ENCODE measurements at regions of chr4 and their contacts with region 1.

Region 1: DNA sequence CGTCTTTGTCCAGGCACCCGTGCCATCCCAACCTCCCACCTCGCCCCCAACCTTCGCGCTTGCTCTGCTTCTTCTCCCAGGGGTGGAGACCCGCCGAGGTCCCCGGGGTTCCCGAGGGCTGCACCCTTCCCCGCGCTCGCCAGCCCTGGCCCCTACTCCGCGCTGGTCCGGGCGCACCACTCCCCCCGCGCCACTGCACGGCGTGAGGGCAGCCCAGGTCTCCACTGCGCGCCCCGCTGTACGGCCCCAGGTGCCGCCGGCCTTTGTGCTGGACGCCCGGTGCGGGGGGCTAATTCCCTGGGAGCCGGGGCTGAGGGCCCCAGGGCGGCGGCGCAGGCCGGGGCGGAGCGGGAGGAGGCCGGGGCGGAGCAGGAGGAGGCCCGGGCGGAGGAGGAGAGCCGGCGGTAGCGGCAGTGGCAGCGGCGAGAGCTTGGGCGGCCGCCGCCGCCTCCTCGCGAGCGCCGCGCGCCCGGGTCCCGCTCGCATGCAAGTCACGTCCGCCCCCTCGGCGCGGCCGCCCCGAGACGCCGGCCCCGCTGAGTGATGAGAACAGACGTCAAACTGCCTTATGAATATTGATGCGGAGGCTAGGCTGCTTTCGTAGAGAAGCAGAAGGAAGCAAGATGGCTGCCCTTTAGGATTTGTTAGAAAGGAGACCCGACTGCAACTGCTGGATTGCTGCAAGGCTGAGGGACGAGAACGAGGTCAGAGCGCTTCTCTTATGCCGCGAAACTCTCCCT is at the start of gene TET2:
- DNase-seq: peak; percentile 94
- H3K4me3 ChIP-seq: peak within 1 kb of the TSS; percentile 79 to 91 (median 84)
- H3K27ac ChIP-seq: peak within 1 kb of the TSS; percentile 85 to 88 (median 88)
- H3K4me1 ChIP-seq: peaks cover 11 to 34% (median 31%) of the 10 kb centered on the region in 4 donors
- H3K27me3 ChIP-seq: no peaks in the 10 kb centered on the region
- CTCF ChIP-seq: peak in 1 of 3 experiments; percentile 18
- EP300 ChIP-seq: no peak
- POLR2A ChIP-seq: no peak
- total RNA-seq, gene TET2: 22.0 to 31.5 (median 28.0) TPM

Region 2: GRCh38 chr4:105191621-105192210 is 45.3 kb after region 1 on chr4:
- intact Hi-C with region 1: no loop called
- DNase-seq: no peak
- H3K4me3 ChIP-seq: peak overlapping the region in 1 of 4 donors; percentile 10
- H3K27ac ChIP-seq: peak overlapping the region; percentile 45 to 52 (median 48)
- H3K4me1 ChIP-seq: peaks cover 36 to 49% (median 43%) of the 10 kb centered on the region in 4 donors
- H3K27me3 ChIP-seq: no peaks in the 10 kb centered on the region
- CTCF ChIP-seq: no peak
- EP300 ChIP-seq: no peak
- POLR2A ChIP-seq: no peak

Region 3: DNA sequence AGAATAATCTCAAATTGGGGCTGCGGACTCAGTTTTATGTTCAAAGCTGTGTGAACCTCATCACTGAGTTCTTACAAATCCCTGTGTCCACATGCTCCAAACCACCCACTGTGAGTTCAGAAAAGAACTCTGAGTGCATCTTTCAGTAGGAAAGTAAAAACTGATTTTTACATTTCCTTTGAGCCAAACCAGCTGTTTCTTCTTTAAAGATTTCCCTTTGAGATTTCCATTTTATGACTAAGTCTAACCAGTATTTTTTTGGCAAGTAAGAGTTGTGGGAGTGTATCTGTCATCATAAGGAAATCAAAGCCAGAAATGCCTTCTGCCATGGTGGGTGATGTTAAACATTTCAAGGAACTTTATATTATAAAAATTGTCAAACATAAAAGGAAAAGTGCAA is 100.3 kb after region 1 on chr4:
- intact Hi-C with region 1: loop called (anchors 10 kb)
- DNase-seq: no peak
- H3K4me3 ChIP-seq: no peak overlapping the region
- H3K27ac ChIP-seq: no peak overlapping the region
- H3K4me1 ChIP-seq: peaks cover 4 to 11% (median 4%) of the 10 kb centered on the region in 4 donors
- H3K27me3 ChIP-seq: no peaks in the 10 kb centered on the region
- CTCF ChIP-seq: no peak
- EP300 ChIP-seq: no peak
- POLR2A ChIP-seq: no peak

Region 4: GRCh38 chr4:106315968-106316772 is 1169.7 kb after region 1 on chr4 and contains the starts of genes AIMP1 and TBCK:
- intact Hi-C with region 1: loop called (anchors 10 kb)
- DNase-seq: peak; percentile 97
- H3K4me3 ChIP-seq: peak within 1 kb of the TSS; percentile 71 to 85 (median 82)
- H3K27ac ChIP-seq: peak within 1 kb of the TSS; percentile 89 to 93 (median 92)
- H3K4me1 ChIP-seq: peaks cover 20 to 47% (median 40%) of the 10 kb centered on the region in 4 donors
- H3K27me3 ChIP-seq: no peaks in the 10 kb centered on the region
- CTCF ChIP-seq: no peak
- EP300 ChIP-seq: no peak
- POLR2A ChIP-seq: peak; percentile 44
- total RNA-seq, gene AIMP1: 19.1 to 29.9 (median 25.7) TPM
- total RNA-seq, gene TBCK: 22.7 to 28.7 (median 27.3) TPM

Measured in esophagus muscularis mucosa (tissue), 4 donors.